ENCODE measurements at regions of chr3 and their contacts with region 1.

Region 1: GRCh38 chr3:52339612-52340011 is 23.5 kb downstream of the DNAH1 start:
- DNase-seq: peak in 7 of 9 donors; percentile 67 to 85 (median 76)
- ATAC-seq: peak; percentile 92
- H3K4me3 ChIP-seq: no peak overlapping the region
- H3K4me3 Mint-ChIP-seq: no peak overlapping the region
- H3K27ac ChIP-seq: no peak overlapping the region
- H3K27ac Mint-ChIP-seq: peak overlapping the region in 7 of 9 donors; percentile 1 to 78 (median 40)
- H3K4me1 ChIP-seq: no peaks in the 10 kb centered on the region
- H3K4me1 Mint-ChIP-seq: peaks cover 7 to 16% (median 8%) of the 10 kb centered on the region in 7 donors
- H3K27me3 ChIP-seq: no peaks in the 10 kb centered on the region
- H3K27me3 Mint-ChIP-seq: no peaks in the 10 kb centered on the region

Region 2: GRCh38 chr3:52144034-52144795 is 195.4 kb before region 1 on chr3:
- CTCF ChIA-PET with region 1: no interaction called
- POLR2A ChIA-PET with region 1: no interaction called
- intact Hi-C with region 1: loop called in 1 of 2 experiments (anchors 1 kb)
- DNase-seq: peak; percentile 70 to 88 (median 82)
- ATAC-seq: peak; percentile 98
- H3K4me3 ChIP-seq: no peak overlapping the region
- H3K4me3 Mint-ChIP-seq: peak overlapping the region in 1 of 10 donors; percentile 6
- H3K27ac ChIP-seq: no peak overlapping the region
- H3K27ac Mint-ChIP-seq: peak overlapping the region in 5 of 9 donors; percentile 38 to 80 (median 64)
- H3K4me1 ChIP-seq: peaks cover 5 to 6% of the 10 kb centered on the region in 2 donors
- H3K4me1 Mint-ChIP-seq: peaks cover 5 to 10% (median 7%) of the 10 kb centered on the region in 7 donors
- H3K27me3 ChIP-seq: no peaks in the 10 kb centered on the region
- H3K27me3 Mint-ChIP-seq: no peaks in the 10 kb centered on the region

Region 3: GRCh38 chr3:52225452-52226228 is 114.0 kb before region 1 on chr3 and contains the start of gene TLR9:
- CTCF ChIA-PET with region 1: interaction called, 92 read pairs
- POLR2A ChIA-PET with region 1: interaction called, 17 read pairs
- intact Hi-C with region 1: loop called (anchors 1 kb)
- DNase-seq: peak in 1 of 9 donors; percentile 6
- ATAC-seq: peak; percentile 73
- H3K4me3 ChIP-seq: no peak within 1 kb of the TSS
- H3K4me3 Mint-ChIP-seq: peak within 1 kb of the TSS; percentile 37 to 87 (median 61)
- H3K27ac ChIP-seq: peak within 1 kb of the TSS; percentile 62
- H3K27ac Mint-ChIP-seq: peak within 1 kb of the TSS; percentile 75 to 93 (median 81)
- H3K4me1 ChIP-seq: peaks cover 35 to 60% of the 10 kb centered on the region in 2 donors
- H3K4me1 Mint-ChIP-seq: peaks cover 47 to 69% (median 61%) of the 10 kb centered on the region in 7 donors
- H3K27me3 ChIP-seq: no peaks in the 10 kb centered on the region
- H3K27me3 Mint-ChIP-seq: no peaks in the 10 kb centered on the region
- total RNA-seq, gene TLR9: 0.27 to 2.5 (median 1.6) TPM

Region 4: GRCh38 chr3:52238761-52239701 is 100.6 kb before region 1 on chr3 and contains the start of gene TWF2:
- CTCF ChIA-PET with region 1: interaction called, 92 read pairs
- POLR2A ChIA-PET with region 1: interaction called, 13 read pairs
- intact Hi-C with region 1: no loop called
- DNase-seq: peak; percentile 87 to 96 (median 91)
- ATAC-seq: peak; percentile 91
- H3K4me3 ChIP-seq: peak within 1 kb of the TSS; percentile 92
- H3K4me3 Mint-ChIP-seq: peak within 1 kb of the TSS; percentile 86 to 100 (median 96)
- H3K27ac ChIP-seq: peak within 1 kb of the TSS; percentile 95
- H3K27ac Mint-ChIP-seq: peak within 1 kb of the TSS; percentile 83 to 99 (median 97)
- H3K4me1 ChIP-seq: peaks cover 59 to 62% of the 10 kb centered on the region in 2 donors
- H3K4me1 Mint-ChIP-seq: peaks cover 59 to 88% (median 76%) of the 10 kb centered on the region in 7 donors
- H3K27me3 ChIP-seq: no peaks in the 10 kb centered on the region
- H3K27me3 Mint-ChIP-seq: no peaks in the 10 kb centered on the region
- total RNA-seq, gene TWF2: 38.7 to 110 (median 63.7) TPM

Region 5: GRCh38 chr3:52291508-52292181 is 48.0 kb before region 1 on chr3:
- CTCF ChIA-PET with region 1: interaction called, 26 read pairs
- POLR2A ChIA-PET with region 1: interaction called, 6 read pairs
- intact Hi-C with region 1: loop called (anchors 1 kb)
- DNase-seq: peak in 6 of 9 donors; percentile 42 to 59 (median 49)
- ATAC-seq: peak; percentile 21
- H3K4me3 ChIP-seq: no peak overlapping the region
- H3K4me3 Mint-ChIP-seq: peak overlapping the region in 8 of 10 donors; percentile 1 to 84 (median 30)
- H3K27ac ChIP-seq: no peak overlapping the region
- H3K27ac Mint-ChIP-seq: peak overlapping the region in 4 of 9 donors; percentile 11 to 86 (median 72)
- H3K4me1 ChIP-seq: peaks cover 10 to 22% of the 10 kb centered on the region in 2 donors
- H3K4me1 Mint-ChIP-seq: peaks cover 19 to 36% (median 30%) of the 10 kb centered on the region in 7 donors
- H3K27me3 ChIP-seq: no peaks in the 10 kb centered on the region
- H3K27me3 Mint-ChIP-seq: peaks cover 0 to 3% (median 0%) of the 10 kb centered on the region in 5 donors

Region 6: DNA sequence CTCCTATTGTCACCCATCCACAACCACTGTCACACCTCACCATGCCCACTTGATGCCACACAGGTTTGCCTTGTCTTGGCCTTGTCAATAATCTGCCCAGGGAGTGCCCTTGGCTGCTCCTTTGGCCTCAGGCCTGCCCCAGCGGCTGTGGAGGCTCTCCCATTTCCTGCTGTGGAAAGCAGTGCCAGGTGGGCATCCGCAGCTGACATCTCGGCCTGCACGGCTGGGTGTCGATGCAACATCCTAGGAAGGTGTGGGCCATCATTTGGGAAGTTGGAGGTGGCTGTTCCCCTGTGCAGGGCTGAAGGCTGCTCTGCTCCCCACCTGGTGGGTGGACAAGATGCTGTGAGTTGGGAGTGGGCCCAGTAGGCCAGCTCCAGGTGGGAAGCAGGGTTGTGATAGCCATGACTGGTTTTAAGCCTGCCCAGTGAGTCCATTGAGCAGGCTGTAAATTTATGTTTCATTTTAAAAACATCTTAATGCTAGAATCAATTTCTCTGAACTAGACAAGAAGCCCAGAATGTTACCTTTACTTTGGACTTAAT is 11.0 kb before region 1 on chr3:
- CTCF ChIA-PET with region 1: interaction called, 12 read pairs
- POLR2A ChIA-PET with region 1: no interaction called
- intact Hi-C with region 1: no loop called
- DNase-seq: no peak
- ATAC-seq: no peak
- H3K4me3 ChIP-seq: no peak overlapping the region
- H3K4me3 Mint-ChIP-seq: no peak overlapping the region
- H3K27ac ChIP-seq: no peak overlapping the region
- H3K27ac Mint-ChIP-seq: peak overlapping the region in 2 of 9 donors; percentile 4 to 60
- H3K4me1 ChIP-seq: no peaks in the 10 kb centered on the region
- H3K4me1 Mint-ChIP-seq: no peaks in the 10 kb centered on the region
- H3K27me3 ChIP-seq: no peaks in the 10 kb centered on the region
- H3K27me3 Mint-ChIP-seq: no peaks in the 10 kb centered on the region

Measured in naive thymus-derived CD4-positive, alpha-beta T cell (primary cell).